K562 (cell line): ENCODE measurements at regions of chr2 and their contacts with region 1.

Region 1: GRCh38 chr2:108583903-108584520 is 49.7 kb downstream of the LIMS1 start:
- DNase-seq: peak; percentile 58 to 84 (median 68)
- ATAC-seq: peak; percentile 85
- H3K4me3 ChIP-seq: no peak overlapping the region
- H3K27ac ChIP-seq: no peak overlapping the region
- H3K4me1 ChIP-seq: peaks cover 16 to 20% of the 10 kb centered on the region in 2 experiments; a peak in 4 of 5 replicates
- H3K27me3 ChIP-seq: no peaks in the 10 kb centered on the region
- CTCF ChIP-seq: peak; percentile 78 to 92 (median 81)
- EP300 ChIP-seq: no peak
- POLR2A ChIP-seq: no peak
- RAD21 ChIP-seq: peak; percentile 91 to 93

Region 2: DNA sequence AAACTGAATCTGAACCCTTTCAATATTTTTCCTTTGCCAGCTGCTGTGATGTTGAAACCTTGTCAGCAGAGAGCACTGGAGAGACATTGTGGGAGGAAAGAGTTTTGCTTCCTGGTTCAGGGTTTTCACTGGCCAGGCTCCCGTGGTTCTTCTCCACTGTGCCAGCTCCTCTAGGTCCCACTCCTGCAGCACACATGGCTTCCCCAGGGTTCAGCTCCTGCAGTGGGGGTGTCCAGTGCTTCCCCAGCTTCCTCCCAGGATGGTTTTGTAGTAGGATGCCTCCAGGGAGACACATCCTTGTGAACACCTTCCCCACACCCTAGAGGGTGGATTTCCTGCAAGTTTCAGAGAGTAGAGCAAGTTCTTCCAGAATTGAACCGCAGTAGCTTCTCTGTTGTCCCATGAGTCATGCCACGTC is 368.2 kb before region 1 on chr2:
- CTCF ChIA-PET with region 1: interaction called, 9 read pairs
- POLR2A ChIA-PET with region 1: no interaction called
- in situ Hi-C with region 1: loop called (anchors 10 kb)
- intact Hi-C with region 1: loop called (anchors 1 kb)
- DNase-seq: peak in 2 of 4 experiments; percentile 13 to 15
- ATAC-seq: peak; percentile 84
- H3K4me3 ChIP-seq: no peak overlapping the region
- H3K27ac ChIP-seq: no peak overlapping the region
- H3K4me1 ChIP-seq: no peaks in the 10 kb centered on the region
- H3K27me3 ChIP-seq: no peaks in the 10 kb centered on the region
- CTCF ChIP-seq: peak; percentile 36 to 54 (median 42); a peak in 4 of 6 replicates
- EP300 ChIP-seq: no peak
- POLR2A ChIP-seq: no peak
- RAD21 ChIP-seq: peak; percentile 37 to 53

Region 3: DNA sequence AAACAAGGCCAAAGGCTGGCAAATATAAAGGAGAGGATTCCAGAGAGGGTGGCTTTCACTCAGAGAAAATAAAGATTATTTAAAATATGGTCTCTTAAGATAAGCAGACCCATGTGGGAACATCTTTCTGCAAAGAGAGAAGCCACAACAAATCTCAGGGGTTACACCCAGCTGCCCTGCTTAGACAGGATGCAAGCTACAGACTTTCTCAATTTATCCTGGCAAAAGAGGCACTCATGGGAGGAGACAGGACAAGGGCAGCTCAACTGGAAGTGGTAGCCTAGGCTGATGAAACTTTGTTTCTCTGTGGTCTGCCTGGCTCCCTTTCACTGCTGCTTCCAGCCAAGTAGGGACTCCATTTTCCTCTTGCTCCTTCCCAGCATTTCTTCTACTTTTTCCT is 232.1 kb before region 1 on chr2:
- CTCF ChIA-PET with region 1: interaction called, 3 read pairs
- POLR2A ChIA-PET with region 1: no interaction called
- in situ Hi-C with region 1: no loop called
- intact Hi-C with region 1: loop called (anchors 1 kb)
- DNase-seq: peak in 2 of 4 experiments; percentile 33 to 36
- ATAC-seq: no peak
- H3K4me3 ChIP-seq: no peak overlapping the region
- H3K27ac ChIP-seq: no peak overlapping the region
- H3K4me1 ChIP-seq: peaks cover 3 to 17% of the 10 kb centered on the region in 2 experiments; a peak in 3 of 5 replicates
- H3K27me3 ChIP-seq: no peaks in the 10 kb centered on the region
- CTCF ChIP-seq: no peak
- EP300 ChIP-seq: no peak
- POLR2A ChIP-seq: no peak
- RAD21 ChIP-seq: no peak

Region 4: GRCh38 chr2:108417255-108417654 is 166.8 kb before region 1 on chr2:
- CTCF ChIA-PET with region 1: no interaction called
- POLR2A ChIA-PET with region 1: no interaction called
- in situ Hi-C with region 1: no loop called
- intact Hi-C with region 1: loop called (anchors 1 kb)
- DNase-seq: peak in 2 of 4 experiments; percentile 35 to 44
- ATAC-seq: peak; percentile 90
- H3K4me3 ChIP-seq: no peak overlapping the region
- H3K27ac ChIP-seq: no peak overlapping the region
- H3K4me1 ChIP-seq: peaks cover 0 to 16% of the 10 kb centered on the region in 2 experiments; a peak in 2 of 5 replicates
- H3K27me3 ChIP-seq: no peaks in the 10 kb centered on the region
- CTCF ChIP-seq: peak; percentile 45 to 95 (median 74); a peak in 5 of 6 replicates
- EP300 ChIP-seq: no peak
- POLR2A ChIP-seq: no peak
- RAD21 ChIP-seq: peak in 1 of 2 experiments; percentile 64; a peak in 2 of 4 replicates